ENCODE measurements at regions of chr6 and their contacts with region 1.

Region 1: GRCh38 chr6:63352587-63353285 is 33.0 kb upstream of the LGSN start:
- DNase-seq: peak in 2 of 5 donors; percentile 15 to 31
- ATAC-seq: peak; percentile 51 to 88 (median 74)
- H3K4me3 ChIP-seq: peak overlapping the region in 3 of 12 donors; percentile 11 to 28 (median 23)
- H3K27ac ChIP-seq: peak overlapping the region in 3 of 12 donors; percentile 9 to 84 (median 30)
- H3K4me1 ChIP-seq: peaks cover 0 to 13% (median 0%) of the 10 kb centered on the region in 12 donors
- H3K27me3 ChIP-seq: no peaks in the 10 kb centered on the region
- CTCF ChIP-seq: peak; percentile 27 to 65 (median 52)
- POLR2A ChIP-seq: no peak

Region 2: DNA sequence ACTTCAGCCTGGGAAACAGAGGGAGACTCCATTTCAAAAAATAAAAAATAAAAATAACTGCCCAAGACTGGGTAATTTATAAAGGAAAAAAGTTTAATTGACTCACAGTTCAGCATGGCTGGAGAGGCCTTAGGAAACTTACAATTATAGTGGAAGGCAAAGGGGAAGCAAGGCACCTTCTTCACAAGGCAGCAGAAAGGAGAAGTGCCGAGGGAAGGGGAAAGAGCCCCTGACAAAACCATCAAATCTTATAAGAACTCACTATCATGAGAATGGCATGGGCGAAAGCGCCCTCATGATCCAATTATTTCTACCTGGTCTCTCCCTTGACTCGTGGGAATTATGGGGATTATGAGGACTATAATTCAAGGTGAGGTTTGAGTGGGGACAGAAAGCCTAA is 62.5 kb after region 1 on chr6:
- intact Hi-C with region 1: no loop called
- DNase-seq: no peak
- ATAC-seq: no peak
- H3K4me3 ChIP-seq: no peak overlapping the region
- H3K27ac ChIP-seq: no peak overlapping the region
- H3K4me1 ChIP-seq: no peaks in the 10 kb centered on the region
- H3K27me3 ChIP-seq: no peaks in the 10 kb centered on the region
- CTCF ChIP-seq: no peak
- POLR2A ChIP-seq: no peak

Region 3: GRCh38 chr6:63598049-63599036 is 245.6 kb after region 1 on chr6:
- intact Hi-C with region 1: loop called in 4 of 10 experiments (anchors 2 to 10 kb)
- DNase-seq: peak; percentile 57 to 66 (median 59)
- ATAC-seq: peak; percentile 87 to 97 (median 92)
- H3K4me3 ChIP-seq: peak overlapping the region; percentile 33 to 63 (median 50)
- H3K27ac ChIP-seq: no peak overlapping the region
- H3K4me1 ChIP-seq: peaks cover 0 to 9% (median 0%) of the 10 kb centered on the region in 12 donors
- H3K27me3 ChIP-seq: peaks cover 0 to 3% (median 0%) of the 10 kb centered on the region in 9 donors
- CTCF ChIP-seq: peak; percentile 69 to 95 (median 82)
- POLR2A ChIP-seq: no peak

Region 4: GRCh38 chr6:63764318-63764916 is 411.7 kb after region 1 on chr6:
- intact Hi-C with region 1: loop called (anchors 2 to 5 kb)
- DNase-seq: no peak
- ATAC-seq: no peak
- H3K4me3 ChIP-seq: no peak overlapping the region
- H3K27ac ChIP-seq: no peak overlapping the region
- H3K4me1 ChIP-seq: no peaks in the 10 kb centered on the region
- H3K27me3 ChIP-seq: no peaks in the 10 kb centered on the region
- CTCF ChIP-seq: peak; percentile 53 to 86 (median 78)
- POLR2A ChIP-seq: no peak